ENCODE measurements at regions of chr3 and their contacts with region 1.

Region 1: DNA sequence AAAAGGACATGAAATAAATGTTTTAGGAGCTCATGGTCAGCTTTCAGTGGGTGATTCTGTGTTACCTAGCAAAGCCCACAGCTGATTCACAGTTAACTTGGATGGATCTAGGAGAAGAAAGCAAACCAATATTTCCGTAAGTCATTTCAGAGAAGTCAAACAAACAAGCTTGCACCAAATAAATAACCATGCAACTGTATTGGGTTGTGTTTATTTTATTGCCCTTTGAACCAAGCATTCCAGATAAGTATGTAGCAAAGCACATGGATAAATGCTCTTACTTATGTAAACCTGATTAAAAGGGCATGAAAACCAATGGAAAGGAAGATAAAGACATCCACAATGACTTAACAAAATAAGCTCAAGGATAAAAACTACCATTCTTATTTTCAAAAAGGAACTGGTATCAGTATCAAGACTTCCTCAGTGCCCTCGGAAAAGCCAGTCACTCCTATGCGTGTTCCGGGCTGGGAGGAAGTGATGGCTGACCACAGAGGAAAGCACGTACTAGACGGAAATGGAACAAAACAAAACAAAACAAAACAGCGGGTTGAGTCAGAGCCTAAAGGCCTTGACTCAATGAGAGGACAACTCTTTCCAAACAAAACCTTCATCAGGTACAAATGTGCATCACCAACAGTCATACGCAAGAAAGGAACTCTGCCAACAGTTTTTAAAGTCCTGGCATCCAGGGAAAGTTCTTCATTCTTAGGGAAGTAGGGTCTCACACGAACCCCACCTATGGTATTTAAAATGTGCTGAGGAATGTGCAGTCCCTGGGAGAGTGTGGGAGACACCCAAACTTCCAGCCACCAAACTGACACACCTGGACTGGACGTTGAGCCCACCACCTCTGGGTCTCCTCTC is 103.3 kb downstream of the SNRK start:
- DNase-seq: peak; percentile 81
- ATAC-seq: peak; percentile 94
- H3K4me3 Mint-ChIP-seq: peak overlapping the region; percentile 7
- H3K27ac Mint-ChIP-seq: peak overlapping the region; percentile 77
- H3K4me1 Mint-ChIP-seq: peaks cover 47% of the 10 kb centered on the region
- H3K27me3 Mint-ChIP-seq: no peaks in the 10 kb centered on the region

Region 2: GRCh38 chr3:43317461-43318316 is 71.9 kb before region 1 on chr3:
- CTCF ChIA-PET with region 1: no interaction called
- POLR2A ChIA-PET with region 1: no interaction called
- intact Hi-C with region 1: no loop called
- DNase-seq: no peak
- ATAC-seq: no peak
- H3K4me3 Mint-ChIP-seq: no peak overlapping the region
- H3K27ac Mint-ChIP-seq: peak overlapping the region; percentile 71
- H3K4me1 Mint-ChIP-seq: peaks cover 69% of the 10 kb centered on the region
- H3K27me3 Mint-ChIP-seq: no peaks in the 10 kb centered on the region

Region 3: DNA sequence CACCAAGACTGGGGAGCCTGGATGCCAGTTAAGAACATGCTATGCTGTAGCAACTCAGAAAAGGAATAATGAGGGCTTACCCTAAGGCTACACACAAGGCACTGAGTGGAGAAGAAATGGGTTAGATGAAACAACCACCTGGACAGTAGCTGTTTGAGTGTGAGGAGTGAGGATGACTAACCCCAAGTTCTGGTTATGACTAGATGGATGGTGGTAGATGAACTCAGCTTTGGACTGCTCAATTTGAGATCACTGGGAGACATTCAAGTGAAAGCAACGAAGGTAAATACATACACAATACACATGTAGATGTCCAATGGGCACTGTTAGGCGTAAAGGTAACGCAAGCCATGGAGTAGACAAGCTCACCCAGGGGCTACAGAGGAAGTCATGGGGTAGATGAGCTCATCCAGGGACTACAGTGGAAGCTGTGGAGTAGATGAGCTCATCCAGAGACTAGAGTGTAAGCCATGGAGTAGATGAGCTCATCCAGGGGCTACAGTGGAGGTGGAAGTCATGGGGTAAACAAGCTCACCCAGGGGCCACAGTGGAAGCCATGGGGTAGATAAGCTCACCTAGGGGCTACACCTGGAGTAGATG is 133.9 kb after region 1 on chr3:
- CTCF ChIA-PET with region 1: no interaction called
- POLR2A ChIA-PET with region 1: no interaction called
- intact Hi-C with region 1: loop called in 1 of 2 experiments (anchors 5 kb)
- DNase-seq: peak; percentile 35
- ATAC-seq: peak; percentile 91
- H3K4me3 Mint-ChIP-seq: no peak overlapping the region
- H3K27ac Mint-ChIP-seq: no peak overlapping the region
- H3K4me1 Mint-ChIP-seq: no peaks in the 10 kb centered on the region
- H3K27me3 Mint-ChIP-seq: no peaks in the 10 kb centered on the region